ENCODE measurements at regions of chr15 and their contacts with region 1.

Region 1: GRCh38 chr15:75249726-75250125 is 8.4 kb upstream of the GOLGA6C start:
- DNase-seq: no peak

Region 2: DNA sequence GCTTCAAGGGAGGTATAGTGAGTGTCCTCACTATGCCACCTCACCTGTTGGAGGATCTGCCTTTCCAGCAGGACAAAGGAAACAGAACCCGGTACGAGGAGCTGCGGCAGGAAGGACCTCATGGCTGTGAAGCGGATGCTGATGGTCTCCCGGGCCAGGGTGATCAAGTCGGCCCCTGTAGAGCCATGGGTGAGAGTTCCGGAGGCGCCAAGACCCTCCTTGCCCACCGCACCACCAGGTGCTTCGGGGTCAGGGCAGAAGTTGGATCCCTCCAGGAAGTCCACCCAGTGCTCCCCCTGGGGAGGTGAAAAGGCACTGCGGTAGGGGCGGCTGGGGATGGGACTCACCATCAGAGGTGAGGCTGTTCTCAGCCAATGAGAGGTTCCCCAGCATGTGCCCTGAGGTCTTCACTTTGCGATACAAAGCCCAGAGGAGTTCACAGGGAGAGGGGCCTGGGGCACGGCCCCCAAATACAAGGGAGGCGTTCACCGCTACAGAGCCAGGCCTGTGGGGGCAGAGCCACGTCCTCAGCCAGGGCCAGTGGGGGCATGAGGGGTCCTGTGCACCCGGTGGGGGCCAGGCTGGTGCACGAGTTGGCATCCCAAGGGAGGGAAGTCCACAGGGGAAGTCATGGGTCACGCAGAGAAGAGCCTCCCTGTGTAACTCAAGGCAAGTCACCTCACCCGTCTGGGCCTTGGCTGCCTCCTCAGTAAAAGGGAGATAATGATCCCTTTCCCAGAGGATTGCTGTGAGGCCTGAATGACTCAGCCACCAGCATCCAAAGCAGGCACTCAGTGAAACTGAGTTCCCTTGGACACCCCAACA is 20.3 kb before region 1 on chr15:
- CTCF ChIA-PET with region 1: no interaction called
- POLR2A ChIA-PET with region 1: no interaction called
- DNase-seq: no peak

Region 3: GRCh38 chr15:75758071-75758872 is 508.5 kb after region 1 on chr15:
- CTCF ChIA-PET with region 1: no interaction called
- POLR2A ChIA-PET with region 1: interaction called, 11 read pairs
- DNase-seq: peak; percentile 97

Region 4: GRCh38 chr15:75831571-75831979 is 581.8 kb after region 1 on chr15:
- CTCF ChIA-PET with region 1: no interaction called
- POLR2A ChIA-PET with region 1: no interaction called
- DNase-seq: no peak